Panc1 (cell line): ENCODE measurements at regions of chr11 and their contacts with region 1.

Region 1: GRCh38 chr11:67545280-67545679 is 22.0 kb upstream of the CABP2 start:
- DNase-seq: no peak
- ATAC-seq: no peak
- H3K4me3 ChIP-seq: no peak overlapping the region
- H3K27ac ChIP-seq: no peak overlapping the region
- H3K4me1 ChIP-seq: peaks cover 3% of the 10 kb centered on the region; the same call in 1 of the 2 replicates
- H3K27me3 ChIP-seq: no peaks in the 10 kb centered on the region
- CTCF ChIP-seq: no peak

Region 2: GRCh38 chr11:67606492-67607201 is 61.4 kb after region 1 on chr11 and contains the start of gene NDUFV1:
- CTCF ChIA-PET with region 1: interaction called, 5 read pairs
- POLR2A ChIA-PET with region 1: interaction called, 14 read pairs
- in situ Hi-C with region 1: no loop called
- intact Hi-C with region 1: no loop called
- DNase-seq: peak; percentile 72
- ATAC-seq: peak; percentile 100
- H3K4me3 ChIP-seq: peak within 1 kb of the TSS; percentile 95 to 99
- H3K27ac ChIP-seq: peak within 1 kb of the TSS; percentile 84
- H3K4me1 ChIP-seq: peaks cover 11% of the 10 kb centered on the region
- H3K27me3 ChIP-seq: no peaks in the 10 kb centered on the region
- CTCF ChIP-seq: peak; percentile 71; the same call in 1 of the 2 replicates
- total RNA-seq, gene NDUFV1: 281 TPM

Region 3: DNA sequence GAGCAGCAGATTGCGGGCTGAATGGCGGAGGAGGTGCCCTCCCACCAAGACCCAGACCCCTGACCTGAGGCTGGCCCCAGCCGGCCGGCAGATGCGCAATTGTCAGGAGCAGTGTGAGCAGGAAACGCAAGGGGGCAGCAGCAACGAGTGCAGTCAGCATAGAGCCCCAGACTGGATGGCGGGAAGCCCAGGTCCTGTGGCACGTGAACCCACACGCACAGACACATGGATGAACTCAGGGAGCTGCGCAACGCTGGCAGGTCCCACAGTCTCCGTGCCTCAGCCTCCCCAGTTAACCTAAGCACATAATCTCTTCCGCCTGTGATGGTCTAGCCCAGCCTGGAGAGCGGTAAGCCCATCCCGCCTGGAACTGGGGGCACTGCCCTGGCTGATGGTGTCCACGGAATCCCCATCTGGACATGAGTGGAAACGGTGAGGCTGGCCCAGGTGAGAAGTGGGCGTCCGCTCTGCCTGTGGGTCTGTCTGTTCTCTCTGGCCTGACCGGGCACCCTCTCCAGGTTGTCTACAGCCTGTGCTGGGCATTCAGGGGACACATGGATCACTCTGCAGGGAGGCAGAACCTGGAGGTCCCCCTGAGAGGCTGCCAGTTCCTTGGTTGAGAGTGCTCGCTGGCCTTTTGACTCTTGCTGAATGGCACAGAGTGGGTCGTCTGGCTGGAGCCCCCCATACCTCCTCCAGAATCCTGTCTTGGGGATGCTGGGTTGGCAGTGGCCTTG is 94.9 kb after region 1 on chr11:
- CTCF ChIA-PET with region 1: no interaction called
- POLR2A ChIA-PET with region 1: no interaction called
- in situ Hi-C with region 1: no loop called
- intact Hi-C with region 1: no loop called
- DNase-seq: no peak
- ATAC-seq: peak; percentile 90
- H3K4me3 ChIP-seq: no peak overlapping the region
- H3K27ac ChIP-seq: no peak overlapping the region
- H3K4me1 ChIP-seq: no peaks in the 10 kb centered on the region
- H3K27me3 ChIP-seq: no peaks in the 10 kb centered on the region
- CTCF ChIP-seq: peak; percentile 96